AG04449 (cell line): ENCODE measurements at regions of chr5 and their contacts with region 1.

Region 1: GRCh38 chr5:140351609-140352334 is 5.4 kb upstream of the HBEGF start:
- DNase-seq: no peak
- H3K4me3 ChIP-seq: no peak overlapping the region
- CTCF ChIP-seq: peak; percentile 41

Region 2: DNA sequence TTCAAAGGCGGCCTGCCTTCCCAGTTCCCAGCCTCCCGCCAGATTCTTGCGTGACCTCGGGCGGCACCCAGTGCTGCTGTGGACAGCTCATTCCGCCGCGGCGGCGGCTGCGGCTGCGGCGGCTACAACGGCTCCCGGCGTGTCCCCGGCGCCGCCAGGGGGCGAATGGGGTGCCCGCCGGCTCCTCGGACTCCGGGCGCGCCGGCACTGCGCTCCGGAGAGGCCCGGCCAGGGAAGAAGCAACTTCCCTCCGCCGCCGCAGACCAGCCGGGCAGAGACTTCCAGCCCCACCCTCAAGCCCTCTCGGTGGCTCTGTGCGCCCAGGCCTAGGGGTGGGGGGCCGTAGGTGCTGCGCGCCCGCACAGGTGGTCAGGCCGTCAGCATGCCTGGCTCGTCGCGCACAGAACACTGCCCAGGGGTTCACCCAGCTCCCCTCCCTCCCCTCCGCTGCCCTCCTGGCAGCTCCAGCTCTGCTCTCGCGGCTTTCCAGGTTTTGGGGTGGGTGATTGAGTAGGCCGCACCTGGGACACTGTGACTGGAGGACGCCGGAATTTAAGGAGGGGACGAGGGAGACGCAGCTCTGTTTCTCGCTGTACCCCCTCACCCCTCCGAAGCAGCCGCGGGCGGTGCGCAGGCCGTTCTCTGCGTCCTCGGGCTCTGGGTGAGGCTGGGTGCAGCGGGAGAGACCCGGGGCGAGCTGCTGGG is 205.8 kb before region 1 on chr5:
- CTCF ChIA-PET with region 1: interaction called, 17 read pairs
- POLR2A ChIA-PET with region 1: no interaction called
- DNase-seq: no peak
- H3K4me3 ChIP-seq: peak overlapping the region; percentile 48
- CTCF ChIP-seq: peak; percentile 69

Region 3: GRCh38 chr5:140267559-140268018 is 84.2 kb before region 1 on chr5:
- CTCF ChIA-PET with region 1: interaction called, 1,796 read pairs
- POLR2A ChIA-PET with region 1: interaction called, 3 read pairs
- DNase-seq: no peak
- H3K4me3 ChIP-seq: no peak overlapping the region
- CTCF ChIP-seq: no peak

Region 4: DNA sequence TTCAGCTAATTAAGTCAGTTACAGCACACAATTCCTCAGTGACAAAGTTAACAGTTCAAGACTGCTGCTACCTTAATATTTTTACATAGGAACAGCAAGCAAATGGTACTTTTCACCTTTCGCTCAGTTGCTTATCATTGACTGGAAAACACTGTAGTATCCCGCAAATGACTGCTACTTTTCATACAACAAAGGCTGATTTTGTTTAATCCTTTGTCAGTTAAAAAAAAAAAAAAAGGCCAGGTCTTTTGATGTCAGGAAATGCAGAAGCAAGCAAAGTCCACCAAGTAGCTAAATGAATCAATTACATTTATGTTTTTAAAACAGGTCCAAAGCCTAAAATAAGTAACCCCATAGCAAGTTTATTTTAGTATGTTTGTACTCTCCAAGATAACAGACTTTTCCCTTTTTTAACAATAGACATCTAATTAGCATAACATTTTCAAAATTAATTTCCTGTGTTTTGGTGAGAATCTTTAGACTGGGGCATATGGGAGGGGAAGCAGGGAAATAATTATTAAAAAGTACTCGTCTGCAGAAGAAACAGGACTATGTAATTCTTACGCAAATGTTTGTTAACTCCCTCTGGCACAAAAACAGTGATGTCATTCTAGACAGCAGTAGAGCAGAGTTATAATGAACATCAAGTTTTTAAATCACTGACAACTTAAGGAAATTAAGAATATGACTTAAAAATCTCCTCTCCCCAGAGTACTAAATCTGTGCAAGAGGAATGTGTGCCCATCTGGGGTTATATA is 58.5 kb before region 1 on chr5:
- CTCF ChIA-PET with region 1: interaction called, 16 read pairs
- POLR2A ChIA-PET with region 1: interaction called, 6 read pairs
- DNase-seq: no peak
- H3K4me3 ChIP-seq: no peak overlapping the region
- CTCF ChIP-seq: no peak

Region 5: GRCh38 chr5:140317859-140318258 is 33.9 kb before region 1 on chr5:
- CTCF ChIA-PET with region 1: interaction called, 23 read pairs
- POLR2A ChIA-PET with region 1: interaction called, 20 read pairs
- DNase-seq: no peak
- H3K4me3 ChIP-seq: no peak overlapping the region
- CTCF ChIP-seq: no peak

Region 6: DNA sequence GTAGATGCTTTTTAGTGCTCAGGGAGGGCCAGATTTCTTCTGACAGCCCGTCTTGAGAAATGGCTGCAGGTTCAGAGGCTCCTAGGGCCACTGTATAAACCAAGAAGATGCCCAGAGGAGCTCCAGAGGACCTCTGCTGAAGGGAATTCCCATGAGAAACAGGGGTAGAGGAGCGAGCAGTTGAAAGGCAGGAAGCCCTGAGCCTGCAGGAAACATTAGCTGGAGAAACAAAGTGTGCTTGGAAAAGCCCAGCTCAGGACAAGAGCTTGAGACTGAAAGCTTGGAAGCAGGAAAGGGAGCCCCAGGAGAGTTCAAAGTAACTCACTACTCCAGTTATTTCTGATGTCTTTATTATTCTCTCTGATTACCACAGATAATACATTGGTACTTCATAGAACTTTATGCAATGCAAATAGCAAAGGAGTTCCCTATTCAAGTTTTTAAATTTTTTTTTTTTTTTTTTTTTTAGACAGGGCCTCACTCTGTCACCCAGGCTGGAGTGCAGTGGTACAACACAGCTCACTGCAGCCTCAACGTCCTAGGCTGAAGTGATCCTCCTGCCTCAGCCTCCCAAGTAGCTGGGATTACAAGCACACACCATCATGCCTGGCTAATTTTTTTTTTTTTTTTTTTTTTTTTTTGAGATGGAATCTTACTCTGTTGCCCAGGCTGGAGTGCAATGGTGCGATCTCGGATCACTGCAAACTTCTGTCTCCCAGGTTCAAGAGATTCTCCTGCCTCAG is 21.9 kb before region 1 on chr5:
- CTCF ChIA-PET with region 1: interaction called, 28 read pairs
- POLR2A ChIA-PET with region 1: interaction called, 13 read pairs
- DNase-seq: no peak
- H3K4me3 ChIP-seq: no peak overlapping the region
- CTCF ChIP-seq: no peak

Region 7: GRCh38 chr5:140372971-140373487 is 21.3 kb after region 1 on chr5:
- CTCF ChIA-PET with region 1: interaction called, 17 read pairs
- POLR2A ChIA-PET with region 1: no interaction called
- DNase-seq: no peak
- H3K4me3 ChIP-seq: no peak overlapping the region
- CTCF ChIP-seq: peak; percentile 76

Region 8: DNA sequence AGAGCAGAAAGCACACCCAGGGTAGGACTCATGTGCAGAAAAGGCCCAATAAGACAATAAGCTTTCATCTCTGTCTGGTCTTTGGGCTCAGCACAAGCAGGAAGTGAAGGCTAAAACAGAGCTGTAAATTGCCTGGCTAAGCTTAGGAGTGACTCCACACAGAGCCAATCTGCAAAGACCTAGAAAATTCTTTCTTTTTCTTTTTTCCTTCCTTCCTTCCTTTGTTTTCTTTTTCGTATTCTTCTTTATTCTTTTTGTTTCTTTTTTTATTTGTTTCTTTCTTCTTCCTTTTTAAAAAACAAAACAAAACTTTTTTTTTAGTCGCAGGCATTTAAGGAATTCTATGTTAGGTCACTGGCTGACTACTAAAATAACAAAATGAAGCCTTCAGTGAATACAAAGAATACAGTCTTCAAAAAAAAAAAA is 225.0 kb after region 1 on chr5:
- CTCF ChIA-PET with region 1: no interaction called
- POLR2A ChIA-PET with region 1: no interaction called
- DNase-seq: no peak
- H3K4me3 ChIP-seq: no peak overlapping the region
- CTCF ChIP-seq: no peak

Region 9: DNA sequence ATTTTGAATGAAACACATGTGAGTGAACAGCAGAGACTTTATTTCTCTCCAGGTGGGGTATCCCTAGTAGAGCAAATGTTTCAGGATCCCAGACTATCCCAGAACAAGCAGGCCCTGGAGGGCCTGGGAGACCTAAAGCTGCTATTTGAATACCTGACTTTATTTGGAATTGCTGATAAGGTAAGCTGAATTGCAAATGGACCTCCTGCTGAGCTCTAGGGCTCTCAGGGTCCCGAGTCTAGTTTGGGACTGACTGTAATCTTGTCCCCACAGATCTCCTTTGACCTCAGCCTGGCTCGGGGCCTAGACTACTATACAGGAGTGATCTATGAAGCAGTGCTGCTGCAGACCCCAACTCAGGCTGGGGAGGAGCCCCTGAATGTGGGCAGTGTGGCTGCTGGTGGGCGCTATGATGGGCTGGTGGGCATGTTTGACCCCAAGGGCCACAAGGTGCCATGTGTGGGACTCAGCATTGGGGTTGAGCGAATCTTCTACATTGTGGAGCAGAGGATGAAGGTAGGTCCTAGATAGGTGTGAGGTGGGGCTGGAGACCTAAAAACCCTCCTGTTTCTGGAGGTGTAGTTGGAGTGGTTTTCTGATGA is 345.2 kb after region 1 on chr5:
- CTCF ChIA-PET with region 1: no interaction called
- POLR2A ChIA-PET with region 1: no interaction called
- DNase-seq: no peak
- H3K4me3 ChIP-seq: no peak overlapping the region
- CTCF ChIP-seq: no peak